Posterior vena cava (tissue), 2 donors: ENCODE measurements at regions of chr22 and their contacts with region 1.

Region 1: GRCh38 chr22:23402275-23403151 is 177.6 kb downstream of the IGLL1 start:
- DNase-seq: peak; percentile 81

Region 2: DNA sequence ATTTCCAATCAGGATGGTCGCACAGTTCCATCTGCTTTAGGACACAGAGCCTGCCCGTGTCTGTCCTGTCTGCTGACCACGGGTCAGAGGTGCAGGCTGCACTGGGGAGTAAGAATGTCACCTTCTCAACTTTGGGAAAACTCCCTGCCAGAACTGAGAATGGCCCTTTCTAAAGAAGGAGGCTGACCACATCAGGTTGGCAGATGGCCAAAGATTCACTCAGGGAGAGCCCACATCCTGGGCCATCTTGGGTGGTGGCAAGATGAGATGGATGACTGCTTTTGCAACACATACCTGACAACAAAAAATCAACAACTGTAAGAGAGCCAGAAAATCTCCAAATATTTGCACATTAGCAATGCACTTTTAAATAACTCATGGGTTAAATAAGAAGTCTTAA is 75.7 kb after region 1 on chr22:
- intact Hi-C with region 1: no loop called
- DNase-seq: no peak

Region 3: DNA sequence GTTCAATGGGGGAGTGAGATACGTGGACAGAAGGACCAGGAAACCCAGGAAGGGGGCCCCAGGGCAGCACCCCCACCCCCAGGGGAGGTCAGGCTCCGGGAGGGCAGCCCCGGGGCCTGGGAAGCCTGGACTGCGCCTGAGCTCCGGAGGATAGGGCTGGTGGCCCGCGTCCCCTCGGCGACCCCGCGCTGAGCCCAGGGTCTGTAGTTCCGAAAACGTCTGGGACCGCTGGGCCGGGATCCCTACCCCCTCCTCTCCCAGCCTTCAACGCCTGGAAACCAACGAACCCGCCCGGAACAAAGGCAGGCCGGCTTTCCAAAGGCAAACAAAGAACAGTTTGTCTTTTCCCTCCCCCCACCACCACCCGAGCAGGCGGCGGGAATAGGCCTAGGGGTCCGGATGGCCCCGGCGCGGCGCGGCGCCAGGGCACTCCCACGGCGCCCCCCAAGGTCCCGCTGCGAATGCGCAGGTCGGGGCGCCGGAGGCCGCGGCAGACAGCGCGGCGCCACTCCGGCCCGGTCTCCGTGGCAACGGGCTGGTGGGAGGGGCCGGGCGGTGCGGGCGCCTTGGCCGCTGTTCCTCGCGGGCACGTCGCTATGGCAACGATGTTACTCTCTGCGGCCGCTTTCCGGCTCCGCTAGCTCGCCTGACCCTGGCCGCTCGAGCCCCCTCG is 119.1 kb after region 1 on chr22:
- intact Hi-C with region 1: loop called in 1 of 2 experiments (anchors 10 kb)
- DNase-seq: peak; percentile 96

Region 4: GRCh38 chr22:23553924-23554870 is 151.7 kb after region 1 on chr22:
- intact Hi-C with region 1: loop called in 1 of 2 experiments (anchors 10 kb)
- DNase-seq: peak; percentile 41